ENCODE measurements at regions of chr10 and their contacts with region 1.

Region 1: DNA sequence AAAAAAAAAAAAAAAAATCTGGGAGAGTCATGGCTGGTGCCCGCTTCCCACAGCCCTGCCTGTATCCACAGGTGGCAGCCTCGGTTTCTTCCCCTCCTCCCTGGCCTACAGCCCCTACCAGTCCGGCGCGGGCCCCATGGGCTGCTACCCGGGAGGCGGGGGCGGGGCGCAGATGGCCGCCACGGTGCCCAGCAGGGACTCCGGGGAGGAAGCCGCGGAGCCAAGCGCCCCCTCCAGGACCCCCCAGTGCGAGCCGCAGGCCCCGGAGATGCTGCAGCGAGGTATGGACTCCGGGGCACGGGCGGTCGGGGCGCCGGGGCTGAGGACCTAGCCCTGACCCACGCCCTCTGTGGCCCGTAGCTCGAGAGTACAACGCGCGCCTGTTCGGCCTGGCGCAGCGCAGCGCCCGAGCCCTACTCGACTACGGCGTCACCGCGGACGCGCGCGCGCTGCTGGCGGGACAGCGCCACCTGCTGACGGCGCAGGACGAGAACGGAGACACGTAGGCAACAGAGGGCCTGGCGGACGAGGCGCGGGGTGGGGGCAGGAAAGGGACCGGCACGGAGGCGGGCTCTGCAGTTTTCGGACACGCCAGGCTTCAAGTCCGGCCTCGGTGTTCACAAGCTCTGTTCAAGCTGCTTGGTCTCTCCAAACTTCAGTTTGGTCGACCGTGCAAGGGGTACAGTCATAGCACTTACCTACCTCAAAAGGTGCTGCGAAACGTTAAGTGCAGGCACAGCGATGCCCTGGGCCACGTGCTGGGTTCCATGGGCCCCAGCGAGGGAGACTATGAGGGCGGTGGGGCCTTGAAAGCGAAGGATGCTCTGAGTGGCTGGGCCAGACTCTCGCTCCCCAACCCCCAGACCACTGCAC is 3.9 kb downstream of the NFKB2 start:
- DNase-seq: peak; percentile 89
- CTCF ChIP-seq: peak; percentile 99

Region 2: DNA sequence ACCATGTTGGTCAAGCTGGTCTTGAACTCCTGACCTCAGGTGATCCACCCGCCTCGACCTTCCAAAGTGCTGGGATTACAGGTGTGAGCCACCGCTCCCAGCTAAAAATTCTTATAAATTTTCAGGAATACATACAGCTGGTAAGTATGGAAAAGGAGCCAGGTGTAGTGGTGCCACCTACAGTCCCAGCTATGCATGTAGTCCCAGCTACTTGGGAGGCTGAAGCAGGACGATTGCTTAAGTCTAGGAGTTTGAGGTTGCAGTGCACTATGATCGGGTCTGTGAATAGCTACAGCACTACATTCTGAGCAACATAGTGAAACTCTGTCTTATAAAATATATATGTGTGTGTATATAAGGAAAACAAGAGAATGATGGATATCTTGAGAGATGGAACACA is 298.3 kb before region 1 on chr10:
- CTCF ChIA-PET with region 1: no interaction called
- POLR2A ChIA-PET with region 1: no interaction called
- DNase-seq: no peak
- CTCF ChIP-seq: no peak

Region 3: GRCh38 chr10:102167861-102168260 is 231.6 kb before region 1 on chr10:
- CTCF ChIA-PET with region 1: interaction called, 20 read pairs
- POLR2A ChIA-PET with region 1: no interaction called
- DNase-seq: no peak
- CTCF ChIP-seq: no peak

Region 4: DNA sequence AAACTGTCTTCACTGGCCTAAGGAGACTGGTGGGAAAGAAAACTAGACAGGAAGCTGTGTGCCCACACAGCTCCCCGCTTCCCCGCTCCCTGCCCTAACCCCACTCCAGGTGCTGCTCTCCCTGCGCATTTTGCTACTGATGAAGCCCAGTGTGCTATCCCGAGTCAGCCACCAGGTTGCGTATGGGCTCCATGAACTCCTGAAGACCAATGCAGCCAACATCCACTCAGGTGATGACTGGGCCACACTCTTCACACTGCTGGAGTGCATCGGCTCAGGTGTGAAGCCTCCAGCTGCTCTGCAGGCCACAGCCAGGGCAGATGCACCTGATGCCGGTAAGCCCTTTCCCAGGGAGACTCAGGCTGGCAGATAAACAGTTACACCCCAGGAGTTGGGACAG is 24.2 kb before region 1 on chr10:
- CTCF ChIA-PET with region 1: interaction called, 13 read pairs
- POLR2A ChIA-PET with region 1: no interaction called
- DNase-seq: no peak
- CTCF ChIP-seq: no peak

Region 5: DNA sequence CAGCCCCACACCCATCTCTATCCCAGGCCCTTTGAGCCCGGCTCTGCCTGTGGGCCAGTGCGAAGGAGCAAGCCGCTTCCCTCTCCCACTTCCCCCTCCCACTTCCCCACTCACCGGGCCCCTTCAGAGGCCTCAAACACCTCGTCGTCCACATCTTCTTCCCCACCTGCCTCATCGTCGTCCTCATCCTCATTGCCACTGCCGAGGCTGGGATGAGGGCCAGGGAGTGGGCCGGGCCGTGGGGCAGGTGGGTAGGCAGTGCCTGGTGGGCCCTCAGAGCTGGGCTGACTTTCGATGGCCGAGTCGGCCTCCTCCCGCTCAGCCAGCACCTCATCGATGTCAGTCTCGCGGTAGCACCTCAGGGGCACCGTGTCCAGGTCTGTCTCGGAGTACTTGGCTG is 15.3 kb after region 1 on chr10:
- CTCF ChIA-PET with region 1: interaction called, 140 read pairs
- POLR2A ChIA-PET with region 1: interaction called, 6 read pairs
- DNase-seq: no peak
- CTCF ChIP-seq: no peak

Region 6: GRCh38 chr10:102450194-102450938 is 50.9 kb after region 1 on chr10:
- CTCF ChIA-PET with region 1: interaction called, 10 read pairs
- POLR2A ChIA-PET with region 1: no interaction called
- DNase-seq: peak; percentile 90
- CTCF ChIP-seq: no peak

Region 7: DNA sequence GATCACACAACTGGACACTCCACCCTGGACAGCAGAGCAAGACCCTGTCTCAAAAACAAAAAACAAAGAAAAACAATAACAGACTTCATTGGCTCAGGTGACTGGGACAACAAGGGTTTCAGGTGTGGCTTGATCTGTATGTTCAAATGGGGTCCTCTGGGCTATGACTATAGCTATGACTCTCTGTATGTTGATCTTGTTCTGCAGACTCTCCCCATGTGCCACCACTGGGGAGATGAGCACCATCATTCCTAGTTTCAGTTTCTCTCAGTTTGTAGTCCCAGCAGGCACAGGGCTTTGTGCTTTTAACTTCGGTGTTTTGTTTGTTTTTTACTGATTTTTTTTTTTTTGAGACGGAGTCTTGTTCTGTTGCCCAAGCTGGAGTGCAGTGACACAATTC is 158.1 kb after region 1 on chr10:
- CTCF ChIA-PET with region 1: no interaction called
- POLR2A ChIA-PET with region 1: no interaction called
- DNase-seq: no peak
- CTCF ChIP-seq: no peak

Region 8: DNA sequence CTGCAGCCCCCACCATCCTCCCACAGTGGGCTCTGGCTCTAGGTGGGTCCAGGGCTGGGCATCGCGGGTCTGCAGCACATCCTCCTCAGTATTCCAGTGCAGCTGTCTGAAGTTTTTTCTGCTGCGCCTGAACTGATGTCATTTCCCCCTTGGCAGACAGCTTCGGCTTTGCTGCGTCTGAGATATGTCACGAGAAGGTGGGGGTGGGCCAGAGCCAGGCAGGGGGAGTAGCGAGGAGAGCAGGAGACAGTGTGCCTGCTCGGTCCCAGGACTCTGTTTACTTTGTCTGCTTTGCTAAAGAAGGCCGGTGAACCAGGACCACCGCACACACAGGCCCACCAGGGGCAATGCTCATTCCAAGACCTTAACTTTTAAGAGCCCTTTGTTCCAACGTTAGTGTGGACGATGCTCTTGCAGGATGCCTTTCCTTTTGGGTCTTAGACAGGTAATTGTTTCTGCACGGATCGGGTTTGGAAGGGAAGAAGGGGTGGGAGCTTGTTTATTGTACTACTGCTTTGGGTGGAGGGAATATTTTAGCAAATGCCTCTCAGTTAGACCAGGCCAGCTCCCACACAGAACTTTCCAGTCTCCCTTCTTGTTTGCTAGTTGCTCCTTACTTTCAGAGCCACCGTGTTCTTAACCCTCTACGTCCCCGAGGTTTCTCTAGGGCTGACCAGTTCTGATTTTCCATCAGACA is 376.7 kb after region 1 on chr10:
- CTCF ChIA-PET with region 1: no interaction called
- POLR2A ChIA-PET with region 1: no interaction called
- DNase-seq: no peak
- CTCF ChIP-seq: no peak